ENCODE measurements at regions of chr1 and their contacts with region 1.

Region 1: GRCh38 chr1:225809842-225810578 is at the start of gene EPHX1:
- DNase-seq: peak in 1 of 2 experiments; percentile 92
- H3K4me3 ChIP-seq: peak within 1 kb of the TSS; percentile 49 to 80 (median 63)
- H3K27ac ChIP-seq: no peak within 1 kb of the TSS; the same call in 1 of the 2 replicates
- H3K4me1 ChIP-seq: peaks cover 7 to 17% (median 10%) of the 10 kb centered on the region in 4 experiments
- H3K27me3 ChIP-seq: peaks cover 0 to 4% (median 0%) of the 10 kb centered on the region in 4 experiments; a peak in 1 of 7 replicates
- CTCF ChIP-seq: peak in 2 of 3 experiments; percentile 7 to 30; a peak in 2 of 4 replicates
- EP300 ChIP-seq: no peak
- POLR2A ChIP-seq: peak; percentile 47 to 77
- RAD21 ChIP-seq: peak in 1 of 2 experiments; percentile 5; a peak in 1 of 4 replicates
- total RNA-seq, gene EPHX1: 79.1 and 80.0 TPM in 2 replicates

Region 2: GRCh38 chr1:225474986-225475820 is 334.8 kb before region 1 on chr1:
- CTCF ChIA-PET with region 1: interaction called, 29 read pairs
- POLR2A ChIA-PET with region 1: no interaction called
- DNase-seq: peak in 1 of 2 experiments; percentile 96
- H3K4me3 ChIP-seq: no peak overlapping the region
- H3K27ac ChIP-seq: no peak overlapping the region
- H3K4me1 ChIP-seq: peaks cover 0 to 6% (median 1%) of the 10 kb centered on the region in 4 experiments; a peak in 4 of 7 replicates
- H3K27me3 ChIP-seq: no peaks in the 10 kb centered on the region
- CTCF ChIP-seq: peak; percentile 100
- EP300 ChIP-seq: no peak
- POLR2A ChIP-seq: no peak
- RAD21 ChIP-seq: peak; percentile 100

Region 3: DNA sequence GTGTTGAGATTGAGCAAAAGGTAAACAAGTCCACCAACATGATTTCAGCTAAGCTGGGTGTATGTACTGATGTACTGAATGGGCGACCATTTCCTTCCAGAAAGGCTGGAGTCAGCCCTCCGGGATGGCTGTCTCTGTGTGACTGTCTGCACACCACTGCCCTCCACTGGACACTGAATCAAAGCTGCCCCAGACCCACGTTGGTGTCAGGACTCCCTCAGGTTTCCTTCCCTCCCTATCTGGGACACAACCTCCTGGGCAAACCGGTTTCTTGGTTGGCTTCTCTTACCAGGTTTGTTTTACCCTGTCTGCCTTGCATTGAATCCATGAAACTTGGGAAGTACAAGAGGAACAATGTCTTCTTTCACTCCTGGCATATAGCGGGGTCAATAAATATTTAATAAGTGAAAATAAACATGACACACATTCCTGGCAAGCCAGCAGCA is 37.7 kb before region 1 on chr1:
- CTCF ChIA-PET with region 1: interaction called, 50 read pairs
- POLR2A ChIA-PET with region 1: interaction called, 166 read pairs
- DNase-seq: peak; percentile 67 to 86
- H3K4me3 ChIP-seq: no peak overlapping the region
- H3K27ac ChIP-seq: no peak overlapping the region
- H3K4me1 ChIP-seq: peaks cover 4 to 12% (median 9%) of the 10 kb centered on the region in 4 experiments; a peak in 5 of 7 replicates
- H3K27me3 ChIP-seq: no peaks in the 10 kb centered on the region; a peak in 1 of 7 replicates
- CTCF ChIP-seq: peak; percentile 92 to 98 (median 95)
- EP300 ChIP-seq: no peak
- POLR2A ChIP-seq: no peak
- RAD21 ChIP-seq: peak; percentile 98

Region 4: DNA sequence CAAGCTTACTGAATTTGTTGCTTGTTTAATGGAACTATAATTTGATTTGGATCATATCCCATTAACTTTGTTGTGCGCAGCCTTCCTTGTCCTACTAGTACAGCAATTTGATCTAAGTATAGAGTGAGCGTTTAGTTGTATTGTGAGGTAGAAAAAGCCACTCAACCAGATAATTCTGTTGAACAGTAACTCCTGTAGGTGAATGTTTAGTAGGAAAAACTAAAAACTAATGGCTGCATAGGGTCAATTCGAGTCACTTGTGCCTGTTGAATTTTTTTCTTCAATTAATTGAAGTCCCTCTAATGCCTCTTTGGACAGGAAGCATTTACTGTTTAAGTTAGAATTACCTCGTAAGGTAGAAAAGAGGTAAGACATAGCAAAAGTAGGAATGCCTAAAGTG is 15.1 kb before region 1 on chr1:
- CTCF ChIA-PET with region 1: interaction called, 25 read pairs
- POLR2A ChIA-PET with region 1: interaction called, 11 read pairs
- DNase-seq: no peak
- H3K4me3 ChIP-seq: no peak overlapping the region
- H3K27ac ChIP-seq: no peak overlapping the region
- H3K4me1 ChIP-seq: no peaks in the 10 kb centered on the region
- H3K27me3 ChIP-seq: no peaks in the 10 kb centered on the region
- CTCF ChIP-seq: no peak
- EP300 ChIP-seq: no peak
- POLR2A ChIP-seq: no peak
- RAD21 ChIP-seq: no peak

Region 5: GRCh38 chr1:225845571-225846259 is 35.7 kb after region 1 on chr1:
- CTCF ChIA-PET with region 1: interaction called, 24 read pairs
- POLR2A ChIA-PET with region 1: interaction called, 15 read pairs
- DNase-seq: peak; percentile 82 to 88
- H3K4me3 ChIP-seq: no peak overlapping the region
- H3K27ac ChIP-seq: no peak overlapping the region
- H3K4me1 ChIP-seq: peaks cover 0 to 8% (median 4%) of the 10 kb centered on the region in 4 experiments; a peak in 4 of 7 replicates
- H3K27me3 ChIP-seq: no peaks in the 10 kb centered on the region; a peak in 1 of 7 replicates
- CTCF ChIP-seq: peak; percentile 91 to 96 (median 94)
- EP300 ChIP-seq: no peak
- POLR2A ChIP-seq: no peak; a peak in 1 of 3 replicates
- RAD21 ChIP-seq: peak; percentile 93 to 96

Region 6: GRCh38 chr1:225987491-225988316 is 177.7 kb after region 1 on chr1:
- CTCF ChIA-PET with region 1: interaction called, 15 read pairs
- POLR2A ChIA-PET with region 1: no interaction called
- DNase-seq: no peak
- H3K4me3 ChIP-seq: no peak overlapping the region
- H3K27ac ChIP-seq: no peak overlapping the region
- H3K4me1 ChIP-seq: no peaks in the 10 kb centered on the region
- H3K27me3 ChIP-seq: no peaks in the 10 kb centered on the region
- CTCF ChIP-seq: peak in 2 of 3 experiments; percentile 18 to 60; a peak in 2 of 4 replicates
- EP300 ChIP-seq: no peak
- POLR2A ChIP-seq: no peak
- RAD21 ChIP-seq: peak; percentile 30 to 35

Measured in H1 (cell line).